GM13977 (cell line): ENCODE measurements at regions of chr5 and their contacts with region 1.

Region 1: DNA sequence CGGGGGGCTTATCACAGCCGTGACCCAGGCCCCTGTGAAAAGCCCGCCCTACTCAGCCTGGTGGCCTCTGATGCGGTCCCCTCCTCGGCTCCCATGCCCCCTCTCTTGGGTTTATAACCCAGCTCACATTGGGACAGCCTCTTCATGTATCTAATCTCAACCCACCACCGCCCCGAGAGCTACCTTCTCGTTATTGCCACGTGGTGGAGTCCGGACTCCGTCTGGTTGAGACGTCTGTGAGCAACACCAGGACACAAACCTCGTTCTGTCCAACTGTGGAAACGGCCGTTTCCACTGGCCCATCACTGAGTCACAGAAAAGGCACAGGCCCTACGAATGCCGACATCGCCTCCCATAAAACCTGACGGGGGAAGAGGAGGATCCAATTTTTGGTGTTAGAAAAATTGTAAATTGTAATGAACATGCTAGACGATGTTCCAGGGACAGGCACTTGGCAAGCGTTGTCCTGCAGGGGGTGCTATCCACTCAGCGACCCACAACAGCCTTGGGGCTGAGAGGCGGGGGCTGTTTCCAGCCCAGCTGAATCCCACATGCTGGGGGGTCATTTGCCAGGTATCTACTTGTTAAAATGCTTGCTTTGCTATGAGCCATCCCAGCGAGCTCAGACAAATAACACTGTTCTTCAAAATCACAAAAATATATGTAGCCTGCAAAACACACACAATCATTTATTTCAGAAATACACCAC is 37.3 kb upstream of the N4BP3 start:
- DNase-seq: peak; percentile 80
- CTCF ChIP-seq: peak; percentile 94

Region 2: DNA sequence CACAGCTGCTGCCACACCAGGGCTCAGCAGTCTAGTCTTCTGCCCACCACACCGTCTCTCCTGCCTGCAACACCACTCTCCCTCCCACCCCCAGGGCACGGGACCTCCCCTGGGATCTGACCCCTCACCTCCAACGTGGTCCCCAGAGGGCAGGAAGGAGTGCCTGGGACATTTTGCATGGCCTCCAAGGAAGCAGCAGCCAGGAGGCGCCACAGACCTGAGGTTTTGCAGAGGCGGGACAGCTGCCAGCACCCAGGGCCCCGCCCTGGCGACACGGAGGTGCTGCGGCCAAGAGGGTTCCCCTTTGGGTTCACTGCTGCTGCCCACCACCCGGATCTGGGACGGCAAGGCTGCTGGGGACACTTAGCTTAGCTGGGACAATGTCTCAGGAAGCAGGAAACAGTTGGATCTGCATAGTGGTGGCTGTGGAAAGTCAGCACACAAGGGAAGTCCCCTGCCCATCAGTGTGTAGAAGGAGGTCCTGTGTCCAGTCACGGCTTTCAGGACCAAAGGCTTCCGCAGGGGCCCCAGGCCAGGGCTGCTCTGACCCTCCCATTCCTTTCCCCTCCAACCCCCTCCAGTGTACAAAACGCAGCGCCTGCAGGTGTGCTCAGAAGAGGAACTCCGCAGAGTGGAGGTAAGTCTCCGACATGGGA is 93.8 kb before region 1 on chr5:
- in situ Hi-C with region 1: no loop called
- DNase-seq: no peak
- CTCF ChIP-seq: peak; percentile 42

Region 3: DNA sequence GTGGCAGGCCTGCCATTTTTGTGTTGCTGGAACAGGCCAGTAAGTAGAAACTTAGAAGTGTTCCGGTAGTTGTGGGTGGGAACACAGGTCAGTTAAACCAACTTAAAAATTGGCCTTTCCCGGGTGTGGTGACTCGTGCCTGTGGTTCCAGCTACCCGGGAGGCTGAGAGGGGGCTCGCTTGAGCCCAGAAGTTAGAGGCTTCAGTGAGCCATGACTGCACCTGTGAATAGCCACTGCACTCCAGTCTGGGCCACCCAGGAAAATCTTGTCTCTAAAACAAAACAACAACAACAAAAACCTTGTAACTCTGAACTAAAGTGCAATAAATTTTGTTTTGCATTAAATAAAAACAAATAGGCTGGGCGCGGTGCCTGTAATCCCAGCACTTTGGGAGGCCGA is 79.1 kb after region 1 on chr5:
- in situ Hi-C with region 1: loop called (anchors 5 kb)
- DNase-seq: no peak
- CTCF ChIP-seq: no peak